ENCODE measurements at regions of chr19 and their contacts with region 1.

Region 1: GRCh38 chr19:38658462-38659306 is 11.2 kb downstream of the ACTN4 start:
- DNase-seq: peak in 1 of 3 donors; percentile 59
- ATAC-seq: peak; percentile 73 to 84
- H3K4me3 ChIP-seq: no peak overlapping the region
- H3K27ac ChIP-seq: peak overlapping the region; percentile 81
- H3K4me1 ChIP-seq: peaks cover 48% of the 10 kb centered on the region
- H3K27me3 ChIP-seq: no peaks in the 10 kb centered on the region

Region 2: DNA sequence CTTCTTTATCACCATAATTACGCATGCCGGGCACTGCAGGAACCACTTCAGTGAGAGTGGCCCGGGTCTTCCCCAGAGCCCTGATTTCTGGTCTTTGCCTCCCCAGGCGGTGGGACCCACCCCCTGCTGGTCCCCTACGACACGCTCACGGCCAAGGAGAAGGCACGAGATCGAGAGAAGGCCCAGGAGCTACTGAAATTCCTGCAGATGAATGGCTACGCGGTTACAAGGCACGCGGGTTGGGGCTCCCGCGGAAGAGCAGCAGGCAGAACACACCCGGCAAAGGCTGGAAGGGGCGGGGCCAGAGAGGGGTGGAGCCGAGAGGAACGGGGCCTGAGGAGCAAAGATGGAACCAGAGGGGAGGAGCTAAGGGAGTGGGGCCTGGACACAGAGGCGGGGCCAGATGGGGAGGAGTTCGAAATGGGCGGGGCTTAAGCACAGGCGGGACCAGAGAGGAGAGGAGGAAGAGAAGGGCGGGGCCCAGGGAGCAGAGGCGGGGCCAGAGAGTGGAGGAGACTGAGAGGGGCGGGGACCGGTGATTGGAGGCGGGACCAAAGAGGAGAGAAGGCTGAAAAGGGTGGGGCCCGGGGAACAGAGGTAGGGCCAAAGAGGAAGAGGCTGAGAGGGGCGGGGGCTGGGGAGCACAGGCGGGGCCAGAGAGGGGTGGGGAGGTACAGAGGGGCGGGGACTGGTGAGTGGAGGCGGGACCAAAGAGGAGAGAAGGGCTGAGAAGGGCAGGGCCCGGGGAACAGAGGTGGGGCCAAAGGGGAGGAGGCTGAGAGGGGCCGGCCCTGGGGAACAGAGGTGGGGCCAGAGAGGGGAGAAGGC is 151.7 kb before region 1 on chr19:
- intact Hi-C with region 1: no loop called
- DNase-seq: peak; percentile 89 to 96 (median 92)
- ATAC-seq: peak; percentile 83 to 94
- H3K4me3 ChIP-seq: no peak overlapping the region
- H3K27ac ChIP-seq: no peak overlapping the region
- H3K4me1 ChIP-seq: no peaks in the 10 kb centered on the region
- H3K27me3 ChIP-seq: no peaks in the 10 kb centered on the region

Region 3: DNA sequence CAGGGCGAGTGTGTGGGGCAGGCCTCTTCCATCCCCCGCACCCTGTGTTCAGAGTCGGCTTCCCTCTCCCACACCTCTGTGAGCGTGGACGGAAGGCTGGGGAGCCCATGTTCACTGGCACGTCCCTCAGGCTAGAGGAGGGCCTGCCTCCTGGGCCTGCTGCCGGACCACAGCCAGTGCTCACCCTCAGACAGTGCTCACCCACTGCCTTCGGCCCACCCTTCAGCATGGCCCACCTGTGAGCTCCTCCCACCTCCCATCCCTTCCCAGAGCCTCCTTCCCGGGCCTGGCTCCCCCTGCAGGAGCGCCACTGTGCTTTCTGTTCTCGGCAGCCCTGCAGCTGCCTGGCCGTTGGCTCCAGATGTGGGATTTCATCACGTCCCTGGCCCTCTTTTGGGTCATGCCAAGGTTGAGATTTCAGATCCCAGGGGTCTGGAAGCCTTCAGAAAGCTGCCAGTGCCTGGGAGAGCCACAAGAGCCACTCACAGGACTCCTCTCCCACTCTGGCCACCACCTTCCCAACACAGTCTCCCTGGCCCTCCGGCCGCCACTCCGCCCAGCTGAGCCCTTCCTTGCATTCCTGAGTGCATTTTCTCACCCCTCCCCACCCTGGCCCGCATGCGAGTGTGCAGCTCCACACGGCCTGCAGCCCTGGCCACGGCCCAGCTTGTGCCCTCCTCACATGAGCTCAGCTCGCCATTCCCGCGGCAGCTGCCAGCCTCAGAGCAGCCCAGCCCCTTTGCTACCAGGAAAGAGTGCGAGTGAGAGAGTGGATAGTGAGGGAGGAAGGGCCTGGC is 60.3 kb after region 1 on chr19:
- intact Hi-C with region 1: loop called in 3 of 4 experiments (anchors 5 to 10 kb)
- DNase-seq: peak; percentile 72 to 86 (median 85)
- ATAC-seq: peak; percentile 12 to 24
- H3K4me3 ChIP-seq: no peak overlapping the region
- H3K27ac ChIP-seq: peak overlapping the region; percentile 79
- H3K4me1 ChIP-seq: peaks cover 30% of the 10 kb centered on the region
- H3K27me3 ChIP-seq: no peaks in the 10 kb centered on the region

Measured in right cardiac atrium (tissue), 5 donors.